ENCODE measurements at regions of chr7 and their contacts with region 1.

Region 1: DNA sequence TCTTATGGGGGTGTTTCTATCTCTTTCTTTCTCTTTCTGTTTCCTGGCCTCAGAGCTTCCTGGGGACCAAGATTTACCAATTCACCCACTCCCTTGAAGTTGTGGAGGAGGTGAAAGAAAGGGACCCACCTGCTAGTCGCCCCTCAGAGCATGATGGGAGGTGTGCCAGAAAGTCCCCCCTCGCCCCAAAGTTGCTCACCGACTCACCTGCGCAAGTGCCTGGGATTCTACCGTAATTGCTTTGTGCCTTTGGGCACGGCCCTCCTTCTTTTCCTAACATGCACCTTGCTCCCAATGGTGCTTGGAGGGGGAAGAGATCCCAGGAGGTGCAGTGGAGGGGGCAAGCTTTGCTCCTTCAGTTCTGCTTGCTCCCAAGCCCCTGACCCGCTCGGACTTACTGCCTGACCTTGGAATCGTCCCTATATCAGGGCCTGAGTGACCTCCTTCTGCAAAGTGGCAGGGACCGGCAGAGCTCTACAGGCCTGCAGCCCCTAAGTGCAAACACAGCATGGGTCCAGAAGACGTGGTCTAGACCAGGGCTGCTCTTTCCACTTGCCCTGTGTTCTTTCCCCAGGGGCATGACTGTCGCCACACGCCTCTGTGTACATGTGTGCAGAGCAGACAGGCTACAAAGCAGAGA is 12.2 kb downstream of the AQP1 start:
- DNase-seq: no peak
- ATAC-seq: no peak

Region 2: DNA sequence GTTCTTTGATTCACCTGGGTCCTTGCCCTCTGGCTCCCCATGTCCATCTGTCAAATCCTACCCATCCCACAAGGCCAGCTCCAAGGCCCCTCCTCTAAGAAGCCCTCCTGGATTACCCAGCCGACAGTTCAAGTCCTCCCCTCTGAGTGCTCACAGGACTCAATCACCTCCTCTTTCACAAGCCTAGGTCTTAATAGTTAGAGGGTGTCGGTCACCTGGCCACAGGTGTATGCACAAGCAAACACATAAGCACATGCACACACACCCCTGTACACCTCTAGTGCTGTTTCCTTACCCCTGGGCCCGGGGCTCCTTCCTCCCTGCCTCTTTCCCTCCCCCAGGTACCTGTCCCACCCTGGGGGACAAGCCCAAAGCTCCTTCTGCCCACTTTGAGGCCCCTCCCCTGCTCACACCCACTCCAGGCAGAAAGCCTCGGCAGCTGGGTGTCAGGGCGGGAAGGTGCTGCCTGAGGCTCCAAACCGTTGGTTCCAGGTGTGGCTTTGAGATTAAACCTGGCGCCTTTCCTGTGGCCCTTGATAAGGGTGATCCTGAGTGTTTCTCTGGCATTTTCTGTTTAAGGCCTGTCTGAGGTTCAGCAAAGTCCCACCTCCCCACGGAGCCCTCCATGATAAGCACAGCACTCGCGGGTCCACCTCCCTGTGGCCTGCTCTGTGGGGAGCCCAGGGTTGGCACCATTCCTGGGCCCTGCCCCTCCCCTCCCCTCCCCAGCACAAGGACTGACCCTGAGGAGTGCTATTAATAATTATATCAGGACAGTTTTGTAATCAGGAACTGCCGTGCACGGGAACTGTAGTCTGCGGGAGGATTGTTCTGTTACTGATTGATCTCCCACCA is 26.9 kb before region 1 on chr7:
- intact Hi-C with region 1: no loop called
- DNase-seq: no peak
- ATAC-seq: peak; percentile 29

Region 3: GRCh38 chr7:30911561-30911969 is 12.3 kb before region 1 on chr7 and contains the start of gene AQP1:
- intact Hi-C with region 1: no loop called
- DNase-seq: peak; percentile 84
- ATAC-seq: peak; percentile 72
- total RNA-seq, gene AQP1: 284 TPM

Region 4: DNA sequence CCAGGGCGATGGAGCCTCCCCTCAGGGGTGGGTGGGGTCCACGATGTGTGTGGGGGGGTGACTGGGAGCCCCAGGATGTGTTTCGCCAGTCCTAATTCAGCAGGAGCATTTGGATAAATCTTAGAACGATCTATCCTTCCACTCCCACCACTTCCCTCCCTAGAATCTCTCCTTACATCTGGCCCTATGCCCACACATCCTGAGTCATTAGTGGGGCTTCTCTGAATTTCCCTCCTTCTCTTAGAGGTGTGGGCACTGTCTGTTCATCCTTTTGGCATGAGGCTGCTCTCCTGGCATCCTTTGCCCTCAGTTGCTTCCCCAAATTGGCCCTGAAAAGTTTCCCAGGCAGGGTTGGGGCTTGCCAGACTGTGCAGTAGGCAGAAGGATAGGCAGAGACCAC is 41.5 kb after region 1 on chr7:
- intact Hi-C with region 1: loop called (anchors 1 kb)
- DNase-seq: no peak
- ATAC-seq: no peak

Region 5: DNA sequence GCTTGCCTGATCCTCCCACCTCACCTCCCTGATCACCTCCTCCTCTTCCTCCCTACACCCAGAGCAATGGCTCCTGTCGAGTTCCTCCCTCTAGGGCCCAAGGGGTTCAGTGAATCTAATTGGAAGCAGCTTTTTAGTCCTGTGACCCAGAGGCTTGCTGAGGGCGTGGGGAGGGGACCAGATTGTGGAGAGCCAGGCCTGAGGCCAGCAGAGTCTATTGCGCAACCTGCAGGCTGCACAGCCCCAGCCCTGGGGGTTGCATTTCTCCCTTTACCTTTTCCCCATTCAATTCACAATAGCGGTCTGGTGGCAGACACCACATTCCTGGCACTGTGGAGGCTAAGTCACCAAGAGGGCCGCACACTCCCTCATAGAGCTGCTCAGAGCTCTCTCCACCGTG is 72.4 kb after region 1 on chr7:
- intact Hi-C with region 1: no loop called
- DNase-seq: no peak
- ATAC-seq: peak; percentile 86

Region 6: GRCh38 chr7:31134246-31135188 is 210.6 kb after region 1 on chr7:
- intact Hi-C with region 1: no loop called
- DNase-seq: peak; percentile 72
- ATAC-seq: peak; percentile 95

Measured in Right ventricle myocardium inferior (tissue), 1 donor.